Aorta (tissue), 5 donors: ENCODE measurements at regions of chr17 and their contacts with region 1.

Region 1: DNA sequence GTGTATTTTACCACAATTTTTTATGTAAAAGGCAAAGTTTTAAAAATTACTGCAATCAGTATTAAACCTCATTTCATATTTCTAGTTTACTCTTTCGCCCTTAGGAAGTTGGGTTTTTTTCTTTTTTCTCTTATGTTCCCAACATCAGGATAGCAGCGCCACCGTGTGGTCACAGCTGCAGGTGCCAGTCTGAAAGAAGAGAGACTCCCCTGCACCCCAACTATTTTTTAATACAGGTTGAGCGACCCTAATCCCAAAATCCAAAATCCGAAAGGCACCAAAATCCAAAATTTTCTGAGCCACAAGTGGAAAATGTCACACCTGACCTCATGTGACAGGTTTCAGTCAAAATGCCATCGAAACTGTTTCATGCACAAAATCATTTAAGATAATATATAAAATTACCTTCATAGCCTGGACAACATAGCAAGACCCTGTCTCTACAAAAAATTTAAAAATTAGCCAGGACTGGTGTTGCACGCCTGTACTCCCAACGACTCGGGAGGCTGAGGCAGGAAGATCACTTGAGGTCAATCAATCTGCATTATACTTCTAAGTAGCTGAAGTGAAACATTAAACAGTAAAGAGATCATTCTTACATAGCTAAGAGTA is 21.8 kb upstream of the ASGR2 start:
- DNase-seq: peak; percentile 85 to 93
- ATAC-seq: peak; percentile 75
- H3K4me3 ChIP-seq: no peak overlapping the region
- H3K27ac ChIP-seq: no peak overlapping the region
- H3K4me1 ChIP-seq: no peaks in the 10 kb centered on the region
- H3K27me3 ChIP-seq: peaks cover 0 to 2% of the 10 kb centered on the region in 2 donors

Region 2: GRCh38 chr17:7045909-7046724 is 90.3 kb before region 1 on chr17:
- intact Hi-C with region 1: loop called in 1 of 2 experiments (anchors 5 kb)
- DNase-seq: no peak
- ATAC-seq: no peak
- H3K4me3 ChIP-seq: no peak overlapping the region
- H3K27ac ChIP-seq: no peak overlapping the region
- H3K4me1 ChIP-seq: no peaks in the 10 kb centered on the region
- H3K27me3 ChIP-seq: no peaks in the 10 kb centered on the region

Region 3: GRCh38 chr17:7056386-7056785 is 80.0 kb before region 1 on chr17:
- intact Hi-C with region 1: loop called (anchors 2 to 5 kb)
- DNase-seq: no peak
- ATAC-seq: no peak
- H3K4me3 ChIP-seq: no peak overlapping the region
- H3K27ac ChIP-seq: no peak overlapping the region
- H3K4me1 ChIP-seq: no peaks in the 10 kb centered on the region
- H3K27me3 ChIP-seq: no peaks in the 10 kb centered on the region